K562 (cell line): ENCODE measurements at regions of chr5 and their contacts with region 1.

Region 1: GRCh38 chr5:64784451-64785025 is 15.8 kb downstream of the CWC27 start:
- DNase-seq: peak; percentile 31 to 84 (median 34)
- ATAC-seq: peak; percentile 93
- H3K4me3 ChIP-seq: no peak overlapping the region
- H3K27ac ChIP-seq: no peak overlapping the region
- H3K4me1 ChIP-seq: no peaks in the 10 kb centered on the region
- H3K27me3 ChIP-seq: no peaks in the 10 kb centered on the region
- CTCF ChIP-seq: peak; percentile 63 to 89 (median 74)
- EP300 ChIP-seq: no peak
- POLR2A ChIP-seq: no peak
- RAD21 ChIP-seq: peak; percentile 83 to 87

Region 2: GRCh38 chr5:64147849-64148441 is 636.6 kb before region 1 on chr5:
- CTCF ChIA-PET with region 1: no interaction called
- POLR2A ChIA-PET with region 1: no interaction called
- in situ Hi-C with region 1: no loop called
- intact Hi-C with region 1: loop called (anchors 5 kb)
- DNase-seq: peak; percentile 14 to 21 (median 18)
- ATAC-seq: no peak
- H3K4me3 ChIP-seq: no peak overlapping the region
- H3K27ac ChIP-seq: no peak overlapping the region
- H3K4me1 ChIP-seq: no peaks in the 10 kb centered on the region
- H3K27me3 ChIP-seq: no peaks in the 10 kb centered on the region
- CTCF ChIP-seq: peak; percentile 34 to 55 (median 48); a peak in 4 of 6 replicates
- EP300 ChIP-seq: no peak
- POLR2A ChIP-seq: no peak
- RAD21 ChIP-seq: peak; percentile 12 to 53; a peak in 2 of 4 replicates

Region 3: DNA sequence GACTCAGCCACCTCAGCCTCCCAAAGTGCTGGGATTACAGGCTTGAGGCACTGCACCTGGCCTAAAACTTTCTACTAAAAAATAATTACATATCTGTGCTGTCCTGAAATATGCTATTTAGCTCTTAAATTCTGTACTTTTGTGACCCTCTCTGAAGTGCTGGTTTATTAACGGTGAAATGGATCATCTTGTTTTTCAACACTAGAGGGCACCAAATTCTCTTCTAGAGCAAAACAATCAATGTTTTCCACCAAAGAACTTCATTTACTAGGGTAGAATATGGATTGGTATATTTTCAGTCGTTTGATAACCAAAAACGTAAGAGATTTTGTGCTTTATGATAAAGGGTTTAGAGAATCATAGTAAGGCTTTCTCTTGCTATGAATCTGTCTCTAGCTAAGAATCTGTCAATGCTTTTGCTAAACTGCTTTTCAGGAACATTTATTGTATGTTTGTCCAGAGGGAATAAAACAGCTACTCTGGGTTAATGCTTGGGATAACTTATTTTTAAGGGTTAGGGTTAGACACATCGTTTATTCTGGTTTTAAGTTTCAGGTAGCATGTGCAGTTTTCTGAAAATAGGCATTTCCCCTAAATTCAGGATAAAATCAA is 555.3 kb before region 1 on chr5:
- CTCF ChIA-PET with region 1: no interaction called
- POLR2A ChIA-PET with region 1: no interaction called
- in situ Hi-C with region 1: loop called (anchors 25 kb)
- intact Hi-C with region 1: no loop called
- DNase-seq: peak; percentile 8 to 36 (median 24)
- ATAC-seq: 0 out of 3 replicates have a peak, but pooled peaks have one; percentile 33
- H3K4me3 ChIP-seq: no peak overlapping the region
- H3K27ac ChIP-seq: no peak overlapping the region
- H3K4me1 ChIP-seq: no peaks in the 10 kb centered on the region
- H3K27me3 ChIP-seq: no peaks in the 10 kb centered on the region
- CTCF ChIP-seq: peak; percentile 18 to 54 (median 33); a peak in 3 of 6 replicates
- EP300 ChIP-seq: no peak
- POLR2A ChIP-seq: no peak
- RAD21 ChIP-seq: peak; percentile 23 to 61; a peak in 3 of 4 replicates